PC-9 (cell line): ENCODE measurements at regions of chr3 and their contacts with region 1.

Region 1: GRCh38 chr3:172066880-172067796 is 27.8 kb downstream of the FNDC3B start:
- DNase-seq: no peak
- H3K4me3 ChIP-seq: no peak overlapping the region
- H3K27ac ChIP-seq: peak overlapping the region; percentile 17; the same call in 1 of the 2 replicates
- H3K4me1 ChIP-seq: peaks cover 21% of the 10 kb centered on the region; the same call in 1 of the 2 replicates
- H3K27me3 ChIP-seq: no peaks in the 10 kb centered on the region
- CTCF ChIP-seq: no peak

Region 2: GRCh38 chr3:172039436-172040077 is 27.6 kb before region 1 on chr3 and contains the start of gene FNDC3B:
- CTCF ChIA-PET with region 1: no interaction called
- POLR2A ChIA-PET with region 1: no interaction called
- intact Hi-C with region 1: no loop called
- DNase-seq: peak; percentile 91 to 96
- H3K4me3 ChIP-seq: peak within 1 kb of the TSS; percentile 63
- H3K27ac ChIP-seq: peak within 1 kb of the TSS; percentile 96
- H3K4me1 ChIP-seq: peaks cover 58% of the 10 kb centered on the region
- H3K27me3 ChIP-seq: no peaks in the 10 kb centered on the region
- CTCF ChIP-seq: no peak
- total RNA-seq, gene FNDC3B: 79.4 and 106 TPM in 2 replicates

Region 3: GRCh38 chr3:172078721-172079120 is 11.6 kb after region 1 on chr3:
- CTCF ChIA-PET with region 1: no interaction called
- POLR2A ChIA-PET with region 1: interaction called, 10 read pairs
- intact Hi-C with region 1: no loop called
- DNase-seq: no peak
- H3K4me3 ChIP-seq: no peak overlapping the region
- H3K27ac ChIP-seq: no peak overlapping the region
- H3K4me1 ChIP-seq: 0 out of 2 replicates have a peak, but pooled peaks cover 15% of the 10 kb centered on the region
- H3K27me3 ChIP-seq: no peaks in the 10 kb centered on the region
- CTCF ChIP-seq: no peak